Mammary epithelial cell (primary cell): ENCODE measurements at regions of chr3 and their contacts with region 1.

Region 1: GRCh38 chr3:132034486-132035464 is at the start of gene CPNE4:
- DNase-seq: peak; percentile 82
- H3K4me3 ChIP-seq: peak within 1 kb of the TSS; percentile 51 to 55 (median 55)
- H3K27ac ChIP-seq: no peak within 1 kb of the TSS
- H3K4me1 ChIP-seq: no peaks in the 10 kb centered on the region
- H3K27me3 ChIP-seq: peaks cover 10% of the 10 kb centered on the region
- CTCF ChIP-seq: peak; percentile 71 to 94
- total RNA-seq, gene CPNE4: 1.5 to 1.7 TPM

Region 2: GRCh38 chr3:130892759-130893375 is 1141.9 kb before region 1 on chr3:
- CTCF ChIA-PET with region 1: no interaction called
- dilution Hi-C with region 1: no loop called
- in situ Hi-C with region 1: no loop called
- intact Hi-C with region 1: loop called (anchors 10 kb)
- DNase-seq: peak; percentile 74
- H3K4me3 ChIP-seq: peak overlapping the region; percentile 51 to 79 (median 77)
- H3K27ac ChIP-seq: peak overlapping the region; percentile 89
- H3K4me1 ChIP-seq: peaks cover 13% of the 10 kb centered on the region
- H3K27me3 ChIP-seq: no peaks in the 10 kb centered on the region
- CTCF ChIP-seq: peak; percentile 86 to 97

Region 3: GRCh38 chr3:131470377-131470776 is 564.4 kb before region 1 on chr3:
- CTCF ChIA-PET with region 1: interaction called, 13 read pairs
- dilution Hi-C with region 1: no loop called
- in situ Hi-C with region 1: no loop called
- intact Hi-C with region 1: no loop called
- DNase-seq: no peak
- H3K4me3 ChIP-seq: no peak overlapping the region
- H3K27ac ChIP-seq: no peak overlapping the region
- H3K4me1 ChIP-seq: no peaks in the 10 kb centered on the region
- H3K27me3 ChIP-seq: no peaks in the 10 kb centered on the region
- CTCF ChIP-seq: no peak

Region 4: DNA sequence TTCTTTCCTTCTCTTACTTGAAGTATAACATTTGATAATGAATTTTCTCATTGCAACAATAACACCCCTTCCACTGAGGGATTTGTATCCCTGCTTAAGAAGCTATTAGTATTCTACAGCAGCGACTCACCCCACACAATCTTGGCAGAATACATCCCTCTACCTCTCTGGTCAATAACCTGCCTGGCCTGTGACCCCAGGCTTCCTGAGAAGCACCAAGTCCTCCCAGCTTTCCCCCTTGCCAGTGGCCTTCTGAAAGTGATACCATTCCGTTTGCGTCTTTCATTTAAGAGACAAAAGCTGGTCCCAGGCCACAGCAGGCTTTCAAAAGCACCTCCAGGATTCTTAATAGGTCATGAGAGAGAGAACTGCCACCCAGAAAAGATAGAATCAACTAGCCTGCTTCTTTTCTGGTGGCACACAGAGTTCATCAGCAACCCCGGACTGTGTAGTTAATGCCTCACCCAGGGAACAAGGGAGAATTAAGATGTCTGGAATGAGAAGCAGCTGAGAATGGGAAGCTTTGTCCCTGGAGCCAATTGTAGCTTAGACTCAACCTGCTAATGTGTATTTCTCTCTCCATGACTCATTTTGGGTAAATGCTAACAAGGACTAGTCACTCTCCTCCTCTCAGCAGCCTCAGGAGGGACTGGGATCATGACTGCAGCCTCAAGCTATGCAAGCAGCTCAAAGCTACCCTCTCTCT is 101.0 kb after region 1 on chr3:
- CTCF ChIA-PET with region 1: interaction called, 4 read pairs
- dilution Hi-C with region 1: no loop called
- in situ Hi-C with region 1: no loop called
- intact Hi-C with region 1: loop called (anchors 1 kb)
- DNase-seq: peak; percentile 98
- H3K4me3 ChIP-seq: peak overlapping the region; percentile 26 to 42 (median 31)
- H3K27ac ChIP-seq: peak overlapping the region; percentile 100
- H3K4me1 ChIP-seq: peaks cover 29% of the 10 kb centered on the region
- H3K27me3 ChIP-seq: no peaks in the 10 kb centered on the region
- CTCF ChIP-seq: no peak

Region 5: GRCh38 chr3:132180337-132180791 is 145.6 kb after region 1 on chr3:
- CTCF ChIA-PET with region 1: no interaction called
- dilution Hi-C with region 1: no loop called
- in situ Hi-C with region 1: loop called in 1 of 2 experiments (anchors 5 kb)
- intact Hi-C with region 1: loop called (anchors 1 kb)
- DNase-seq: peak; percentile 63
- H3K4me3 ChIP-seq: no peak overlapping the region
- H3K27ac ChIP-seq: no peak overlapping the region
- H3K4me1 ChIP-seq: no peaks in the 10 kb centered on the region
- H3K27me3 ChIP-seq: no peaks in the 10 kb centered on the region
- CTCF ChIP-seq: peak; percentile 43 to 72

Region 6: GRCh38 chr3:132210476-132211346 is 175.9 kb after region 1 on chr3:
- CTCF ChIA-PET with region 1: interaction called, 3 read pairs
- dilution Hi-C with region 1: no loop called
- in situ Hi-C with region 1: no loop called
- intact Hi-C with region 1: loop called (anchors 1 kb)
- DNase-seq: peak; percentile 41
- H3K4me3 ChIP-seq: no peak overlapping the region
- H3K27ac ChIP-seq: no peak overlapping the region
- H3K4me1 ChIP-seq: no peaks in the 10 kb centered on the region
- H3K27me3 ChIP-seq: no peaks in the 10 kb centered on the region
- CTCF ChIP-seq: peak; percentile 94 to 95

Region 7: GRCh38 chr3:132399054-132399929 is 364.5 kb after region 1 on chr3:
- CTCF ChIA-PET with region 1: no interaction called
- dilution Hi-C with region 1: no loop called
- in situ Hi-C with region 1: no loop called
- intact Hi-C with region 1: loop called (anchors 10 kb)
- DNase-seq: peak; percentile 47
- H3K4me3 ChIP-seq: no peak overlapping the region
- H3K27ac ChIP-seq: no peak overlapping the region
- H3K4me1 ChIP-seq: no peaks in the 10 kb centered on the region
- H3K27me3 ChIP-seq: no peaks in the 10 kb centered on the region
- CTCF ChIP-seq: peak; percentile 85 to 86